WTC11 (cell line): ENCODE measurements at regions of chr20 and their contacts with region 1.

Region 1: GRCh38 chr20:40689943-40690835 is 1.2 kb upstream of the MAFB start:
- DNase-seq: peak; percentile 95
- ATAC-seq: peak; percentile 55
- H3K4me3 Mint-ChIP-seq: peak overlapping the region; percentile 78
- H3K27ac Mint-ChIP-seq: no peak overlapping the region
- H3K4me1 Mint-ChIP-seq: peaks cover 41% of the 10 kb centered on the region
- H3K27me3 Mint-ChIP-seq: peaks cover 96% of the 10 kb centered on the region
- CTCF ChIP-seq: peak; percentile 87

Region 2: GRCh38 chr20:40749985-40750506 is 59.9 kb after region 1 on chr20:
- CTCF ChIA-PET with region 1: no interaction called
- POLR2A ChIA-PET with region 1: no interaction called
- DNase-seq: no peak
- ATAC-seq: no peak
- H3K4me3 Mint-ChIP-seq: no peak overlapping the region
- H3K27ac Mint-ChIP-seq: no peak overlapping the region
- H3K4me1 Mint-ChIP-seq: no peaks in the 10 kb centered on the region
- H3K27me3 Mint-ChIP-seq: peaks cover 3% of the 10 kb centered on the region; the same call in 1 of the 2 replicates
- CTCF ChIP-seq: no peak

Region 3: GRCh38 chr20:40945754-40946450 is 255.7 kb after region 1 on chr20:
- CTCF ChIA-PET with region 1: interaction called, 13 read pairs
- POLR2A ChIA-PET with region 1: no interaction called
- DNase-seq: peak; percentile 73
- ATAC-seq: peak; percentile 96
- H3K4me3 Mint-ChIP-seq: no peak overlapping the region
- H3K27ac Mint-ChIP-seq: no peak overlapping the region
- H3K4me1 Mint-ChIP-seq: peaks cover 26% of the 10 kb centered on the region
- H3K27me3 Mint-ChIP-seq: peaks cover 6% of the 10 kb centered on the region
- CTCF ChIP-seq: no peak